Activated CD4-positive, alpha-beta T cell treated with anti-CD3 and anti-CD28 coated beads, Interleukin-2, amount 10 ng/mL, durations not matched to agents 24 days and 14 days (primary cell): ENCODE measurements at regions of chr2 and their contacts with region 1.

Region 1: DNA sequence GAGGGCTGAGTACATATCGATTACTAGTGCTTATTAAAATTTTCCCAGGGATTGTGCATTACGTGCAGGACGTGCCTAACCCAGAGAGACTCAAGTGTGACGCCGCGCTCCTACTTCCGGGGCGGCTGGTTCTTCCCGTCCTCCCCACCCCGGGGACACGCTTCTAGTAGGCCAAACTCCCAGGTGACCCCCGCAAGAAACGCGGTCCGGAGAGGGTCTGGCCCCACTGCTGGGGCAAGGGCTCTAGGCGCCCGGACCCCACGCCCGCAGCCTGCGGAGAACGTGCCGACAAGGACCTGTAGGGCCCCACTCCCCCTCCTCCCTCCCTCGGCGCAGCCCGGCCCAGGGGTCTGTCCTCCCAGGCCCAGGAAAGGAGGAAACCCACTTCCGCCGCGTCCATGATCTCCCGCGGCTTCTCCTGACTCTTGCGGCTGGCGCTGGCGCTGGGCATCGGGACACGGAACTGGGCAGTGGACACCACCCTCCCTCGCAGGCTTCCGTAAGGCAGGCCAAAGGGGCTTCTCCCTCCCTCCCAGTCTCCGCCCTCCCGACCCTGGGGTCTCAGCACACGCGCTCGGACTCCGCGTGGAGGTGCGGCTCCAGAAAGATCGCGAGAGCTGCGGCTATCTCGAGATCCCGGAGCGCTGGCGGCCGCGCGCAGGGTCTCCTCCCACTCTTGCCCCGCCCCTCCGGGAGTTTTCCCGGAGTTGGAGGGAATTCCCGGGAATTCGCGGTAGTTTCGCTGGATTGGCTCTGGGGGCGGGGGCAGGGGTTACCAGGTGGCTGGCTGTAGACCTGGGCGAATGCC is at the start of gene DARS1:
- DNase-seq: peak; percentile 95
- H3K4me3 Mint-ChIP-seq: peak within 1 kb of the TSS; percentile 93
- H3K27ac Mint-ChIP-seq: peak within 1 kb of the TSS; percentile 100
- H3K4me1 Mint-ChIP-seq: peaks cover 48% of the 10 kb centered on the region
- H3K27me3 Mint-ChIP-seq: no peaks in the 10 kb centered on the region
- total RNA-seq, gene DARS1: 153 and 160 TPM in 2 replicates

Region 2: DNA sequence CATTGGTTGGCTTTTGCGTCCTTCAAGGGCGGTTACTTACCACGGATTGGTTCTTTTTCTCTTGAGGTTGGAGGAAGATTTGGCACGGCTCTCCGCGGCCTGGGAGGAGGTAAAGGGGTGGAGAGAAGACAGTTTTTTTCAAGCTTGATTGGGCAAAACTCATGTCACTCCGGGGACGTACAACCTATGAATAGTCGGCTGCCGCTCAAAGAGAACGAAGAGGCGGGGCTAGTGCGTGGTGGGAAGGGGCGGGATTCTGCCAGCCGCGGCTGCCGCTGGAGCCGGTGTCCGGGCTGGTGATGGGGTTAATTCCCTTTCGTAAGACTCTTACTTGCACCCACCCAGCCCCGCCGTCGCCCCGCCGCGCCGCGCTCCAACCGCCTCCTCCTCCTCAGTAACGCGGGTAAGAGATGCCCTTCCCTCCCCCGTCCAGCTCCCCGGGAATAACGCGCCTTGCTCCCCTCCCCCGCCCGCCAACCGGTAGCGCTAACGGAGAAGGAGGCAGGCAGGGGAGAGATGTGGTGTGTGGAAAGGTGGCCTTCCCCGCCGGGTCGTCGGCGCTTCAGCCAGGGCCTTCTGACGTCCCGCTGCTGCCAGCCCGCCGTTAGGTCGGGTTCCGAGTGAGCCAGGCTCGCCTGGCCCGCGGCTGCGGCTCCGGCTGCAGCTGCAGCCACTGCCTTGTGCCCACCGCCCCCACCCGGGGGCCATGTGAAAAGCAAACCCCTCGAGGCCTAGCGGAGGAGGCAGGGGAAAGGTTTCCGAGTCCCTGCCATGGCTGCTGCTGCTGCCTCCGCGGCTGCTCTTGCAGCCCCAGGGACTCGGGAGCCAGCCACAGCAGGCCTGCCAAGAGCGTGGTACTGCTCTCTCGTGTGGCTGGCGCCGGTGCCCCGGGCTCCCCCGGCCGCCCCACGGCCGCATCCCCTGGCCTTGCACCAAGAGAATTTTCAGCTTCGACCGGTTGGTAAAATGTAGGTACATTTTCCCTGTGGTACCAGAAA is 453.7 kb before region 1 on chr2 and contains the start of gene R3HDM1:
- intact Hi-C with region 1: loop called (anchors 10 kb)
- DNase-seq: peak; percentile 97
- H3K4me3 Mint-ChIP-seq: no peak within 1 kb of the TSS
- H3K27ac Mint-ChIP-seq: no peak within 1 kb of the TSS
- H3K4me1 Mint-ChIP-seq: peaks cover 29% of the 10 kb centered on the region
- H3K27me3 Mint-ChIP-seq: no peaks in the 10 kb centered on the region
- total RNA-seq, gene R3HDM1: 65.8 and 78.3 TPM in 2 replicates

Region 3: DNA sequence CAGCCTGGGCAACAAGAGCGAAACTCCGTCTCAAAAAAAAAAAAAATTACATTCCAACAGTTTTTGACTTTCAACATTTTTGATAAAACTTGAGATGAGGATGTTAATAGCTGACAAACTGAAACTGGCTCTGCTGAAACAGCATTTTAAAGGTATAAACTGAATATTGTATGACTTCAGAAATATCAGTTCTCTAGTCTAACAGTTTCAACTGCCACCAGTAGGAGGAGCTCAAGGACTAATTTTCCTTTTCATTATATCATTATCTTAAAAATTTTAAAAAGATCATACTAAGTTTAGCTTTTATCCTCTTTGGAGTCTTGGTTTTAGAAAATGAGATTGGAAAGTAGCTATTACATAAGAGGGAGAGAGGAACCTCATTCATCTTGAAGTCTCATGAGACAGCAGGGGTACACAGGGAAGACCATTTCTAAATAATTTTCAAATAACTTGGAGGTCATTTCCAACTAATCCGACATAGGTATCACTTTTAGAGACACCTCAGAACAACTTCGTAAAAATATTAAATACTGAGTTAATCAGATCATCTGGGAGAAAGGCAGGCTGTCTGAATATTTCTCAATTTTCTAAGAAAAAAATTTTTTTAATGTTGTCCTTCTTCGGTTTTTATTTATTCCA is 71.4 kb before region 1 on chr2:
- intact Hi-C with region 1: loop called (anchors 5 kb)
- DNase-seq: peak; percentile 86
- H3K4me3 Mint-ChIP-seq: no peak overlapping the region
- H3K27ac Mint-ChIP-seq: no peak overlapping the region
- H3K4me1 Mint-ChIP-seq: peaks cover 18% of the 10 kb centered on the region
- H3K27me3 Mint-ChIP-seq: no peaks in the 10 kb centered on the region

Region 4: DNA sequence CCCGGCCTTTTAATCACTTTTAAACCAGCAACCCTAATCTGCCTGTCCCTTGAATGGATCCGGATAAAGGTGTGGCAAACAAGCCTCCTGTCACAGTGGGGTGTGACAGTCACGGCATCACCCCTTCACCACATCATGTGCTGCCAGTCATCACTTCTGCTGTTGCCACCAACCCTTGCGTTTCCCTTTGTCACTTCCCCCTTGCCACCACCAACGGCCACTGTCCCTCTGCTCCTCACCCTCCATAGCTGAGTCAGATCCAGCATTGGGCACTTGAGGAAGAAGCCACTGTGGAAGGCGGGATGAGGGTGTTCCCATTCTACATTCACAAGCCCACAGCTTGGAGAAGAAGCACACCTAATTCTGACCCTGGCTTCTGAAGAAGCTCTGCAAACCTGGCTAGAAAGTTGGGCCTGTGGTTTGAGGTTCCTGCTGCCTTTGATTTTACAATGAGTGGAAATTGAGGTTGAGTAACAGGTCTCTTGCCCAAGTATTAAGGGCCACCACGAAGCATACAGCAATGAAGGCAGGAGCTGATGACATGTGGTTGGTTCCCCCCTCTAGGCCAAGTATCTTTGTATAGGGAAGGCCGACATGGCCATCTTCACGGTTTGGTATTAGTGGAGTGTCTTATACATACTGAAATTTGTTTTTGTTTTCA is 23.1 kb after region 1 on chr2:
- intact Hi-C with region 1: loop called (anchors 2 kb)
- DNase-seq: peak; percentile 85
- H3K4me3 Mint-ChIP-seq: peak overlapping the region; percentile 25
- H3K27ac Mint-ChIP-seq: peak overlapping the region; percentile 60
- H3K4me1 Mint-ChIP-seq: peaks cover 35% of the 10 kb centered on the region
- H3K27me3 Mint-ChIP-seq: no peaks in the 10 kb centered on the region

Region 5: GRCh38 chr2:136075466-136075865 is 90.2 kb after region 1 on chr2:
- intact Hi-C with region 1: no loop called
- DNase-seq: no peak
- H3K4me3 Mint-ChIP-seq: no peak overlapping the region
- H3K27ac Mint-ChIP-seq: no peak overlapping the region
- H3K4me1 Mint-ChIP-seq: peaks cover 12% of the 10 kb centered on the region
- H3K27me3 Mint-ChIP-seq: no peaks in the 10 kb centered on the region

Region 6: DNA sequence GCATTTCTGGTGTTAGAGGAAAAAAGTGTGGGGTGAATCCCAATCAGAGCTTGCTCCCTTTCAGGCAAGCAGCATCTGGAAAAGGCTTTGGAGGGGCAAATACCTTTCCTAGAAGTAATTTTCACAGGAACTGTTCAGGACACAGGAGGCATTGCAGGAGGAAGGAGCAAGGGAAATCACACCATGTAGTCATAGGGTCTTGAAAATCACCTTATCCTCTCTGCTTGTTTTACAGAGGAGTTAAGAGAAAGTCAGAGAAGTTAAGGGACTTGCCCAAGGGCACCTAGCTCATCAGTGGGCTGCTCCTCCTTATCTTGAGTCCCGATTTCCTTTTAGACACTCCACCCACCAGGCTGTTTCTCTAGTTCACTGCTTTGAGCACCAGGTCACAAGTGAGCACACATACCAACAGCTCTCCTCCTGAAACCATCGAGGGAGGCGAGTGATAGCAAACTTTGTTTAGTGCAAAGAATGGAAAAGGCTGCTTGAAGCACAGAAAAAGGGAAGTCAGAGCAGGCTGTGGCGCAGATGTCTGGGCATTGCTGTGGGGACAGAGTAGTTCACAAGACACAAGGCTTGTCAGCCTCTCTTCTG is 221.9 kb after region 1 on chr2:
- intact Hi-C with region 1: loop called (anchors 2 kb)
- DNase-seq: peak; percentile 60
- H3K4me3 Mint-ChIP-seq: peak overlapping the region; percentile 8
- H3K27ac Mint-ChIP-seq: peak overlapping the region; percentile 92
- H3K4me1 Mint-ChIP-seq: peaks cover 23% of the 10 kb centered on the region
- H3K27me3 Mint-ChIP-seq: peaks cover 4% of the 10 kb centered on the region

Region 7: DNA sequence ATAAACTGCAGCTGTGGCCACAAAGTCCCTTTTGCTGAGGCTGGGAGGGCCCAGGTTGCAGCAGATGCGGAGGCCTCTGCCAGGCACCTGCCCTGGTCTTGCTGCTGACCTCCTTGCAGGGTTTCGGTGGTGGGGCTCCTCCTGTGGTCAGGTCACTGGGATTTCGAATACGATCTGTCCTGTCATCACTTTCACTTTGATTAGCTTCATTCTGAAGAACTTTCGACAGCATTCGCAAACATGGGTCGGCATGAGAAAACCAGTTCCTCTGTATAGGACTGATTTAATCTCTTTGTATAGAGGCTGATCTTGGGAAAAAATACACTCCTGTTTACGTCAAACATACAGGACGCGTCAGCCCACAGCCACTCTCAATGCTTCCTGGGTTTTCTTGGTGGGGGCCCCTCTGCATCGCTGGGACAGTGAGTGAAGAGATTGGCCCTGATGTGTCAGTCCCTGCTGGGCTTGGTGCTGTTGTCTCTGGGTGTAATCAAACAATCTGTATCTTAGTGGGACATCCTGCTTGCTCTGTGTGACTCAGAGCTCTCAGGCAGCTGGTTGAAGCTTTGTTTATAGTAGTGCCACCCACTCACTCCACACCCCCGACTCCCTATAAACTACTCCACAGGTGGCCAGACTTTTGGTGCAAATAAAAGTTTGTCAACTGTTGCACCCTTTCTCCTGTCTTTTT is 342.1 kb after region 1 on chr2:
- intact Hi-C with region 1: loop called (anchors 1 kb)
- DNase-seq: peak; percentile 91
- H3K4me3 Mint-ChIP-seq: peak overlapping the region; percentile 74
- H3K27ac Mint-ChIP-seq: peak overlapping the region; percentile 92
- H3K4me1 Mint-ChIP-seq: peaks cover 49% of the 10 kb centered on the region
- H3K27me3 Mint-ChIP-seq: no peaks in the 10 kb centered on the region